CD8-positive, alpha-beta T cell (primary cell): ENCODE measurements at regions of chr7 and their contacts with region 1.

Region 1: DNA sequence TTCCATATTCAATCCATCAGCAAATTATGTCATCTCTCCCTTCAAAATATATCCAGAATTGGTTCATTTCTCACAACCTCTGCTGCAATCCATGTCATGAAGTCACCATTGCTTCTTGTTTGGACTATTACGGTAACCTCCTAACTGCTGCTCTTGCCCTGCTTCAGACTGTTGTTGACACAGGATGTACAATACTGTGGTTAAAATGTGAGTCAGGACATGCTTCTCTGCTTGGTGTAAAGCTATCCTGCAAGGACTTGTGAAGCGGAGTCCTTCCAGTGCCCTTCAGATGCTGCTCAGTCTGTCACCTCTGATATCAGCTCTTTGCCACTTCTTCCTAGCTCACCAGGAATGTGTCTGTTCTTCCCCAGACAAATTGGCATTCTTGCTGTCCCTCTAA is 10.4 kb upstream of the NXPH1 start:
- DNase-seq: no peak
- ATAC-seq: no peak
- H3K4me3 ChIP-seq: no peak overlapping the region
- H3K4me3 Mint-ChIP-seq: no peak overlapping the region
- H3K27ac ChIP-seq: no peak overlapping the region
- H3K27ac Mint-ChIP-seq: no peak overlapping the region
- H3K4me1 ChIP-seq: no peaks in the 10 kb centered on the region
- H3K4me1 Mint-ChIP-seq: no peaks in the 10 kb centered on the region
- H3K27me3 ChIP-seq: peaks cover 0 to 6% of the 10 kb centered on the region in 2 experiments
- H3K27me3 Mint-ChIP-seq: peaks cover 4% of the 10 kb centered on the region
- CTCF ChIP-seq: no peak

Region 2: GRCh38 chr7:8442814-8443313 is 19.8 kb after region 1 on chr7:
- CTCF ChIA-PET with region 1: interaction called, 3 read pairs
- POLR2A ChIA-PET with region 1: no interaction called
- intact Hi-C with region 1: loop called in 1 of 2 experiments (anchors 1 kb)
- DNase-seq: peak in 6 of 9 experiments; percentile 11 to 53 (median 41)
- ATAC-seq: peak; percentile 71
- H3K4me3 ChIP-seq: no peak overlapping the region
- H3K4me3 Mint-ChIP-seq: no peak overlapping the region
- H3K27ac ChIP-seq: no peak overlapping the region
- H3K27ac Mint-ChIP-seq: no peak overlapping the region
- H3K4me1 ChIP-seq: peaks cover 17% of the 10 kb centered on the region
- H3K4me1 Mint-ChIP-seq: peaks cover 9% of the 10 kb centered on the region
- H3K27me3 ChIP-seq: peaks cover 26 to 33% of the 10 kb centered on the region in 2 experiments
- H3K27me3 Mint-ChIP-seq: peaks cover 72% of the 10 kb centered on the region
- CTCF ChIP-seq: no peak

Region 3: DNA sequence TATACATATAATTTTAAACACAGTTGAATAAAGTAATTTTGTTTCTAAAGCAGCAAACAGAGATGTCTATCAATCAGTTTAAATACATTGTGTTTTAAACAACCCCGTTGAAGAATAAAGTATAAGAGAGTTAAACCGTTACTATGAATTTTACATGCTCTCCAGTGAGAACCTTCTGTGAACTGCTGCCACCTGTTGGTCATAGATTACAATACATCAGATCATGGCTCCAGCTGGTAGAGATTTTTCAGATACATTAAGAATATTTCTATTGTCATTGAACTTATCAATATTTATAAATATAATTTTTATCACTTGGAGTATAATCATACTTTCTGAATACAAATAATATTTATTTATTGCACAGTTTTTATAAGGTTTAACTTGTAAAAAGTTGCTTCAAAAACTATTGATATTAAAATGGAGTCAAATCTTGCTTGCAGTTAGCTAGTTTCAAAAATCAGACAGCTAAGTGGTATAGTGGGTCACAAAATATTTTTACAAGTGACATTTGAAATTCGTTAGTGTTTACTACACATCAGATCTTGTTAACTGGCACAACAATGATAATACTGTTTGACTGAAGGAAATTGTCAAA is 1989.5 kb after region 1 on chr7:
- CTCF ChIA-PET with region 1: no interaction called
- POLR2A ChIA-PET with region 1: no interaction called
- intact Hi-C with region 1: loop called in 1 of 2 experiments (anchors 5 kb)
- DNase-seq: peak in 2 of 9 experiments; percentile 8 to 20
- ATAC-seq: no peak
- H3K4me3 ChIP-seq: no peak overlapping the region
- H3K4me3 Mint-ChIP-seq: no peak overlapping the region
- H3K27ac ChIP-seq: no peak overlapping the region
- H3K27ac Mint-ChIP-seq: no peak overlapping the region
- H3K4me1 ChIP-seq: no peaks in the 10 kb centered on the region
- H3K4me1 Mint-ChIP-seq: no peaks in the 10 kb centered on the region
- H3K27me3 ChIP-seq: no peaks in the 10 kb centered on the region
- H3K27me3 Mint-ChIP-seq: no peaks in the 10 kb centered on the region
- CTCF ChIP-seq: peak; percentile 56